ENCODE measurements at regions of chr22 and their contacts with region 1.

Region 1: DNA sequence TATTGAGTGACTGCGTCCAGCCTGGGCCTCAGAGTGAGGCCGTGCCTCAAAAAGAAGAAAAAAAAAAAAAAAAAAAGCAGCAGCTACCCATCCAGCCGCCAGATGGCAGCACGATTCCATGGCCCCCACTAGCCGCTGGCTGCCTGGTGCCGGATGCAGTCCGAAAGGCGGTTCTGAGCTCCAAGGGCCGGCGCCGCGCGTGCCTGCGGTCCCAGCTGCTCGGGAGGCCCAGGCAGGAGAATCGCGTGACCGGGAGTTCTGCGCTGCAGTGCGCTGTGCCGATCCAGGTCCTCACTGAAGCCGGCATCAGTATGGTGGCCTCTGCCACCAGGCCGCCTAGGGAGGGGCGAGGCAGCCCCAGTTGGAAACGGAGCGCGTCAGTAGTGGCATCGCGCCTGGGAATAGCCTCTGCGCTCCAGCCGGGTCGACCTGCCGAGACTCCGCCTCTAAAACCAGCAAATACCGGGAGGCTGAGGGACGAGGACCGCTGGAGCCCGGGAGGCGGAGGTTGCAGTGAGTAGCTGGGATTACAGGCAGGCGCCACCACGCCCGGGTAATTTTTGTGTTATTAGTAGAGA is 19.3 kb downstream of the SCARF2 start:
- DNase-seq: peak; percentile 69 to 75 (median 69)
- H3K4me3 ChIP-seq: peak overlapping the region in 5 of 7 experiments; percentile 18 to 75 (median 57)
- H3K27ac ChIP-seq: no peak overlapping the region
- H3K4me1 ChIP-seq: peaks cover 0 to 20% (median 19%) of the 10 kb centered on the region in 4 experiments
- H3K27me3 ChIP-seq: peaks cover 0 to 2% (median 0%) of the 10 kb centered on the region in 5 experiments

Region 2: GRCh38 chr22:20354238-20354975 is 63.9 kb before region 1 on chr22:
- CTCF ChIA-PET with region 1: no interaction called
- POLR2A ChIA-PET with region 1: no interaction called
- DNase-seq: no peak
- H3K4me3 ChIP-seq: peak overlapping the region in 1 of 7 experiments; percentile 11
- H3K27ac ChIP-seq: no peak overlapping the region
- H3K4me1 ChIP-seq: no peaks in the 10 kb centered on the region
- H3K27me3 ChIP-seq: no peaks in the 10 kb centered on the region

Region 3: GRCh38 chr22:20405931-20406685 is 12.2 kb before region 1 on chr22:
- CTCF ChIA-PET with region 1: interaction called, 28 read pairs
- POLR2A ChIA-PET with region 1: no interaction called
- DNase-seq: no peak
- H3K4me3 ChIP-seq: no peak overlapping the region
- H3K27ac ChIP-seq: no peak overlapping the region
- H3K4me1 ChIP-seq: no peaks in the 10 kb centered on the region
- H3K27me3 ChIP-seq: no peaks in the 10 kb centered on the region

Region 4: GRCh38 chr22:20429254-20430100 is 11.2 kb after region 1 on chr22:
- CTCF ChIA-PET with region 1: interaction called, 17 read pairs
- POLR2A ChIA-PET with region 1: no interaction called
- DNase-seq: peak; percentile 61 to 75 (median 74)
- H3K4me3 ChIP-seq: peak overlapping the region; percentile 27 to 75 (median 61)
- H3K27ac ChIP-seq: no peak overlapping the region
- H3K4me1 ChIP-seq: peaks cover 0 to 43% (median 39%) of the 10 kb centered on the region in 4 experiments
- H3K27me3 ChIP-seq: peaks cover 0 to 96% (median 30%) of the 10 kb centered on the region in 5 experiments

Region 5: GRCh38 chr22:20456064-20456721 is 37.9 kb after region 1 on chr22:
- CTCF ChIA-PET with region 1: interaction called, 48 read pairs
- POLR2A ChIA-PET with region 1: interaction called, 5 read pairs
- DNase-seq: peak; percentile 83 to 89 (median 86)
- H3K4me3 ChIP-seq: no peak overlapping the region
- H3K27ac ChIP-seq: no peak overlapping the region
- H3K4me1 ChIP-seq: peaks cover 0 to 4% (median 0%) of the 10 kb centered on the region in 4 experiments
- H3K27me3 ChIP-seq: no peaks in the 10 kb centered on the region

Region 6: DNA sequence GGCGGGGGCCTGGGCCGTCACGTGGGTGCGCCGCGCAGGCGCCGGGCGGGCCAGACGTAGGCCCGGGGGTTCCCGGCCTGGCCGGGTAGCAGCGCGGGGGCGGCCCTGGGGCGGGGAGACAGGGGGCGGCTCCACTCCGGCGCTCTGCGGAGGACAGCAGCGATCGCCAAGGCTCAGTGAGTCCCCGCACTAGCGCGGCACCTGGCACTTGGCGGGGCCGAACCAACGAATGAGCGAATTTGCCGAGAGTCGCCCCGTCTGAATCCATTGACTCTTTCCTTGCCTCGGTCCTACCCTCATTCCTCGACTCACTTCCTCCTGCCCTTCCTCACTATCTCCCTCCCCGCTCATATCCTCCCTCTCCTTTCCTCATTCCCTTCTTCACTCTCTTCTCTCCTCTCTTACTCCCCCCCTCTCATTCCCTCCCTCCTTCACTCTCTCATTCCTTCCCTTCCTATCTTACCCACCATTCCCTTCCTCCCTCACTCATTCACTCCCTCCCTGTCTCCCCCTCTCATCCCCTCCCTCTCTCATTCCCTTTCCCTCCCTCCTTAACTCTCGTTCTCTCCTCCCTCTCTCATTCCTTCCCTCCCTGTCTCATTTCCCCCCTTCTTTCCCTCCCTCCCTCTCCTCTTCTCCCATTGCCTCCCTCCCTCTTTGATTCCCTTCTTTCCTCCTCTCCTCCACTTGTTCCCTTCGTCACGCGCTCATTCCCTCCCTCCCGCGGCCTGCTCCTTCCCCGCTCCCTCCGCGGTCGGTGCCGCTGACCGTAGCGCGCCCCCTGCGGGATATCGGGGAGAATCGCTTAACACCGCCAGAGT is 77.8 kb after region 1 on chr22:
- CTCF ChIA-PET with region 1: interaction called, 14 read pairs
- POLR2A ChIA-PET with region 1: no interaction called
- DNase-seq: peak; percentile 88 to 94 (median 93)
- H3K4me3 ChIP-seq: peak overlapping the region; percentile 21 to 90 (median 75)
- H3K27ac ChIP-seq: peak overlapping the region; percentile 59 to 92
- H3K4me1 ChIP-seq: peaks cover 0 to 22% (median 17%) of the 10 kb centered on the region in 4 experiments
- H3K27me3 ChIP-seq: no peaks in the 10 kb centered on the region